HEK293 (cell line): ENCODE measurements at regions of chr1 and their contacts with region 1.

Region 1: GRCh38 chr1:51296383-51297357 is 33.7 kb downstream of the TTC39A start:
- H3K4me3 ChIP-seq: no peak overlapping the region
- H3K27ac ChIP-seq: no peak overlapping the region
- H3K4me1 ChIP-seq: no peaks in the 10 kb centered on the region
- CTCF ChIP-seq: peak; percentile 90

Region 2: GRCh38 chr1:51235673-51236530 is 60.8 kb before region 1 on chr1 and contains the start of gene RNF11:
- CTCF ChIA-PET with region 1: interaction called, 10 read pairs
- POLR2A ChIA-PET with region 1: interaction called, 3 read pairs
- H3K4me3 ChIP-seq: peak within 1 kb of the TSS; percentile 98
- H3K27ac ChIP-seq: peak within 1 kb of the TSS; percentile 93
- H3K4me1 ChIP-seq: peaks cover 10% of the 10 kb centered on the region; the same call in 1 of the 2 replicates
- CTCF ChIP-seq: no peak

Region 3: DNA sequence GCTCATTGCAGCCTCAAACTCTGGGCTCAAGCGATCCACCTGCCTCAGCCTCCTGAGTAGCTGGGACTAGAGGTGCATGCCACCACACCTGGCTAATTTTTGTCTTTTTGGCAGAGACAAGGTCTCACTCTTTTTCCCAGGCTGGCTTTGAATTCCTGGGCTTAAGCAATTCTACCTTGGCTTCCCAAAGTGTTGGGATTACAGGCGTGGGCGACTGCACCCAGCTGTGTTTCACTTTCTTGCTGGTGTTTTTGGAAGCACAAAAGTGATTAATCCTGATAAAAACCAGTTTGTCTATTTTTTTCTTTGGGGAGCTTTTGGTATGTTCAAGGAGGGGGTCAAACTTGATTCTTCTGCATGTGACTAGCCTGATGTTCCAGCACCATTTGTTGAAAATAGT is 41.3 kb before region 1 on chr1:
- CTCF ChIA-PET with region 1: interaction called, 11 read pairs
- POLR2A ChIA-PET with region 1: no interaction called
- H3K4me3 ChIP-seq: no peak overlapping the region
- H3K27ac ChIP-seq: no peak overlapping the region
- H3K4me1 ChIP-seq: peaks cover 2% of the 10 kb centered on the region; the same call in 1 of the 2 replicates
- CTCF ChIP-seq: no peak

Region 4: GRCh38 chr1:51264451-51264850 is 32.2 kb before region 1 on chr1:
- CTCF ChIA-PET with region 1: interaction called, 10 read pairs
- POLR2A ChIA-PET with region 1: no interaction called
- H3K4me3 ChIP-seq: no peak overlapping the region
- H3K27ac ChIP-seq: no peak overlapping the region
- H3K4me1 ChIP-seq: peaks cover 14% of the 10 kb centered on the region
- CTCF ChIP-seq: no peak

Region 5: DNA sequence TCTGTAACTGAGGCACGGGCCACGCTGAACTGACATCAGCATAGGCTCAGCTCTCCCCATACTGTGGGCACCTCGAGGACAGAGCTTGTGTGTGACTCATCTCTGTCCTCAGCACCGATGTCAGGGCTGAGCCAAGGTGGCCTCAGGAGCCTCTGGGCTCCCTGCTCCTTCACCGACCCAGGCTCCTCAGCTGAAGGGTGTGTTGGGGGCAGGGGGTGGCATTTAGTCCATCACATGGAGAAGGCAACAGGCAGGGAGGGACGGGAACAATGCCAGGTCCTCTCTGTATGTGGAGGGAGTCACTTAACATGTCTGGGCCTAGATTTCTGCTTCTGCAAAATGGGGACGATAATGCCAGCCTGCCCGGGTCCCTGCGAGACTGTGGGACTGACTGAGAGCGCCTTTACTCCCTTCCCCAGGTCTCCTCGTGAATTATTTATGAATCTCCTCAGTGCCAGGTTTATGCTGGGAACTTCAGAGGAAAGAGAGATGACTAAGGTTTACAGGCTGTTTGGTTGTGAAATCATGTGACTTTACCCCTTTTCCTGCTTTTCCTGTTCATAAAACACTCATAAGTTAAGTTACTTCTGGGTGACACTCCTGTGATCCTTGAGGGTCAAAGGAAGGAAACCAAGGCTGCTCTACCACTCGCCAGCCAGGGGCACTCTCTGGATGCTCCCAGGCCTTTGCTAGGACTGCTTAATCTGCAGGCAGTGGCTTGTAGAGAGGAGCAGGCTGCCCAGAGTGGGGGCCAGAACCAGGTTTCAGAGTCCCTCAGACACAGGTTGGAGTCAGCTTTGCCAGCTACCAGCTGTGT is 17.5 kb after region 1 on chr1:
- CTCF ChIA-PET with region 1: interaction called, 13 read pairs
- POLR2A ChIA-PET with region 1: no interaction called
- H3K4me3 ChIP-seq: no peak overlapping the region
- H3K27ac ChIP-seq: no peak overlapping the region
- H3K4me1 ChIP-seq: no peaks in the 10 kb centered on the region
- CTCF ChIP-seq: no peak